HEK293 (cell line): ENCODE measurements at regions of chr1 and their contacts with region 1.

Region 1: DNA sequence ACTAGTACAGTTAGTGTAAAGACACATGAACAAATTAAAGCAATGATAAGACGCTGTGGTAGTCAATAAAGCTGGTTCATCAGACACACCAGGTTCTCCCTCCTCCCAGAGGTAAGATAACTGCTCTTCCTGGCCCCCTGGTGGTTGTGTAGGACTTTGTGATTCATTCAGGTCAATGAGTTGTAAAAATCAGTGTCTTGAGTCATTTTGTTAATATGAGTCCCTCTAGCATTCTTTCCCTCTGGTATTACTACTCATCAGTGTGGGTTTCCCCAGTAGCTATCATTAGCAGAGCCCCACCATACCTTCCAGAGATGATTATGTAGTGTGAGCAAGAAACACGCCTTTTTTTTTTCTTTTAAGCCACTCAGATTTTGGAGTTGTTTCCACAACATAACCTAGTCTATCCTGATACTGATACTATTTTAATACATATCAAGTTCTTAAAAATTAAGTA is 3.6 kb upstream of the SETDB1 start:
- H3K4me3 ChIP-seq: no peak overlapping the region
- H3K27ac ChIP-seq: no peak overlapping the region
- H3K4me1 ChIP-seq: no peaks in the 10 kb centered on the region
- CTCF ChIP-seq: peak; percentile 52

Region 2: GRCh38 chr1:150748878-150749719 is 173.4 kb before region 1 on chr1:
- CTCF ChIA-PET with region 1: no interaction called
- POLR2A ChIA-PET with region 1: no interaction called
- H3K4me3 ChIP-seq: no peak overlapping the region
- H3K27ac ChIP-seq: no peak overlapping the region
- H3K4me1 ChIP-seq: peaks cover 5% of the 10 kb centered on the region; the same call in 1 of the 2 replicates
- CTCF ChIP-seq: no peak

Region 3: GRCh38 chr1:150813058-150813707 is 109.4 kb before region 1 on chr1:
- CTCF ChIA-PET with region 1: interaction called, 13 read pairs
- POLR2A ChIA-PET with region 1: no interaction called
- H3K4me3 ChIP-seq: no peak overlapping the region
- H3K27ac ChIP-seq: no peak overlapping the region
- H3K4me1 ChIP-seq: peaks cover 13% of the 10 kb centered on the region
- CTCF ChIP-seq: peak; percentile 66; the same call in 1 of the 2 replicates

Region 4: GRCh38 chr1:150881331-150882070 is 41.0 kb before region 1 on chr1:
- CTCF ChIA-PET with region 1: interaction called, 16 read pairs
- POLR2A ChIA-PET with region 1: no interaction called
- H3K4me3 ChIP-seq: no peak overlapping the region
- H3K27ac ChIP-seq: no peak overlapping the region
- H3K4me1 ChIP-seq: no peaks in the 10 kb centered on the region
- CTCF ChIP-seq: no peak

Region 5: DNA sequence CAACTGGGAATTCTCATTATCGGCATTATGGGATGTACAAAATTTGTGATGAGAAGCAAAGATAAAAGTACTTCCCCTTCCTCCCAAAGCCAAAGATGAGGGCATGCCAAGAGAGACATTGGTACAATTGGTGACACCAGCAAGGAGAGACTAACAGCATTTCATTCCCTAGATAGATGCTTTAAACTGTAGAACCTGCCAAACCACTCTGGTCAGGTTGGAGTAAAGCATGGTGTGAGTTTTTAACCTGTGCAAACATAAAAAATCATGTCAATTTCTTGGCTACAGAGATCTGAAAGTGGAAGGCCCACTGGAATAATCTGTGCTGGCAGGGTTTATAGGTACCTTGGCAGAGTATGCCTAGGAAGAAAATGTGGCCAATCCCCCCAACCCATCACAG is 16.2 kb before region 1 on chr1:
- CTCF ChIA-PET with region 1: interaction called, 26 read pairs
- POLR2A ChIA-PET with region 1: no interaction called
- H3K4me3 ChIP-seq: no peak overlapping the region
- H3K27ac ChIP-seq: no peak overlapping the region
- H3K4me1 ChIP-seq: no peaks in the 10 kb centered on the region
- CTCF ChIP-seq: no peak

Region 6: DNA sequence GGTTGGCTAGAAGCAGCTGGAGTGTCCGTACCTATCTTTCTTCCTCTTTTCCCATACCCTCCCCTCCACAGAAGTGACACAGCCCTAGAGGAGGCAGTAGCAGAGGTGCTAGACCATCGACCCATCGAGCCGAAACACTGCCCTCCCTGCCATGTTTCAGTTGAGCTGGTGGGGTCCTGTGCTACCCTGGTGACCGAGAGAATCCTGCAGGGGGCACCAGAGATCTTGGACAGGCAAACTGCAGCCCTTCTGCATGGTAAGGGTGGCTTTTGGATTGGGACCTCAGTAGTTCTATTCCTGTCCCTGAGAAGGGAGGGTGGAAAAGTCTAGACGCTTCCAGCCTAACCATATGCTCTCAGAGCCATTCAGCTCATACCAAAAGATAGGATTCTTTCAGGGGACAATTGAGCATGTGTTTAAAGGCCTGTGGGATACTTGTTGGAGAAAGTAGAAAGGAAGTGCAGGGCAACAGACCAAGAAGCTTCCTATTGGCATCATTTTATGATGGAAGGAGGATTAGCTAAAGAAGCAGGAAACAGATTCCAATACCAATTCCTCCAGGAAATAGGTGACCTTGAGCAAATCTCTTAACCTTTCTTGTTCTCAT is 102.1 kb after region 1 on chr1:
- CTCF ChIA-PET with region 1: no interaction called
- POLR2A ChIA-PET with region 1: no interaction called
- H3K4me3 ChIP-seq: no peak overlapping the region
- H3K27ac ChIP-seq: no peak overlapping the region
- H3K4me1 ChIP-seq: no peaks in the 10 kb centered on the region
- CTCF ChIP-seq: peak; percentile 66